ENCODE measurements at regions of chr1 and their contacts with region 1.

Region 1: GRCh38 chr1:247037483-247038320 is 29.8 kb upstream of the ZNF695 start:
- DNase-seq: no peak
- ATAC-seq: no peak
- H3K4me3 ChIP-seq: no peak overlapping the region
- H3K27ac ChIP-seq: no peak overlapping the region
- H3K4me1 ChIP-seq: no peaks in the 10 kb centered on the region
- H3K27me3 ChIP-seq: no peaks in the 10 kb centered on the region
- CTCF ChIP-seq: no peak
- POLR2A ChIP-seq: no peak

Region 2: DNA sequence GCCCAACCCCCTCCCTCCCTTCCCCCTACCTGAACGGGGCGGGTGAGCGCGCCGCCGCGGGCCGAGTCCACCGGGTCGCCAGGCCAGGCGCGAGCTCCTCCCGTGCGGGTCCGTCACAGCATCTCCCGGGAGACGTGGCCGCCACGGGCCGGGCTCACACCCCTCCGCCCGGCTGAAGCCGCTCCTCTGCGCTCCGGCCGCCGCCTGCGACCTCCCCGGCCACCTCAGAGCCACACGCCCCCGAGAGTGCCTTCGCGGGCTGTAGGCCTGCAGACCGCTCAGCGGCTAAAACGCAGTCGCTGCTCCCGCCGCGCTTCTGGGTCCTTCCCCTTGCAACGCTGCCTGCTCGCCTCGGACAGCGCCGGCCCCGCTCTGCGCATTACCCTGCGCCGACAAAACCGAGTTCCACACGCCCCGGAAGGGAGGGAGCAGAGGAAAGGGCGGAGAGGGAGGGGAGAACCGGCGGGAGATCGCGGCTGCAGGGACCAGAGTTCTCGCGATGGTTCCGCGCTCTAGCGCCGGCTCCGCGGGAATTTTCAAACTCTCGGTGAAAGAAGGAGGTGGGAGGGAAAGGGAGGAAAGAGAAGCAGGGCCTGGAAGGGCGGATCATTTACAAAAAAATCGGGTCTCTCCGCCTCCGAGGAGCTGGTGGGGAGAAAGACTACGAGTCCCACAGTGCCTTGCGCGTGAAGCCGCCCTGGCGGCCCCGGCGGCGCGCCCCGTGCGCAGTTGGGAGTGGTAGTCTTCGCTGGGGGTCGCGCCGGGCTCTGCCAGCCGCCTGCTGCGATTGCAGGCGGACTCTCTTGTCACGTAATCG is 105.9 kb before region 1 on chr1 and contains the start of gene AHCTF1:
- intact Hi-C with region 1: no loop called
- DNase-seq: peak; percentile 96 to 97 (median 97)
- ATAC-seq: peak; percentile 97 to 98 (median 98)
- H3K4me3 ChIP-seq: peak within 1 kb of the TSS; percentile 87 to 100 (median 99)
- H3K27ac ChIP-seq: peak within 1 kb of the TSS; percentile 82 to 92 (median 91)
- H3K4me1 ChIP-seq: peaks cover 0 to 12% (median 5%) of the 10 kb centered on the region in 4 donors
- H3K27me3 ChIP-seq: no peaks in the 10 kb centered on the region
- CTCF ChIP-seq: no peak
- POLR2A ChIP-seq: peak; percentile 99
- total RNA-seq, gene AHCTF1: 10.3 to 23.4 (median 14.9) TPM

Region 3: DNA sequence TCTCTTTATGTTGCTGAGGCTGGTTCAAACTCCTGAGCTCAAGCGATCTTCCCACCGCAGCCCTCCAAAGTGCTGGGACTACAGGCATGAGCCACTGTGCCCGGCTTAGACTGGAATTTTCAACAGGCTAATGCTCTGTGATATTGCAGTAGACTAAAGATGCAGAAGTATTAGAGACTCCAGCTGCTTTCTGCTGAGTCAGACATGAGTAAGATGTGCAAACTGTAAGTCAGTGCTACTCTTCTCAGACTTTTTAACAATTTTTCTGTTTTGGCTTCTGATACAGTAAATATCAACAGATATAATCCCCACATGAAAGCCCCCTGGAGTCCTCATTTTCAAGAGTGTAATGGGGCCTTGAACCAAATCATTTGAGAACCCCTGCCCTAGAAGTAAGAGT is 349.0 kb after region 1 on chr1:
- intact Hi-C with region 1: loop called in 1 of 2 experiments (anchors 5 kb)
- DNase-seq: no peak
- ATAC-seq: peak in 1 of 4 donors; percentile 13
- H3K4me3 ChIP-seq: no peak overlapping the region
- H3K27ac ChIP-seq: no peak overlapping the region
- H3K4me1 ChIP-seq: no peaks in the 10 kb centered on the region
- H3K27me3 ChIP-seq: no peaks in the 10 kb centered on the region
- CTCF ChIP-seq: no peak
- POLR2A ChIP-seq: no peak